Caco-2 (cell line): ENCODE measurements at regions of chr2 and their contacts with region 1.

Region 1: GRCh38 chr2:63888490-63889402 is 47.0 kb downstream of the UGP2 start:
- DNase-seq: peak; percentile 53 to 72
- H3K4me3 ChIP-seq: no peak overlapping the region
- H3K4me3 Mint-ChIP-seq: no peak overlapping the region
- H3K27ac Mint-ChIP-seq: peak overlapping the region; percentile 13
- H3K4me1 ChIP-seq: no peaks in the 10 kb centered on the region
- H3K4me1 Mint-ChIP-seq: no peaks in the 10 kb centered on the region
- H3K27me3 ChIP-seq: no peaks in the 10 kb centered on the region
- H3K27me3 Mint-ChIP-seq: no peaks in the 10 kb centered on the region
- CTCF ChIP-seq: peak; percentile 91 to 93

Region 2: DNA sequence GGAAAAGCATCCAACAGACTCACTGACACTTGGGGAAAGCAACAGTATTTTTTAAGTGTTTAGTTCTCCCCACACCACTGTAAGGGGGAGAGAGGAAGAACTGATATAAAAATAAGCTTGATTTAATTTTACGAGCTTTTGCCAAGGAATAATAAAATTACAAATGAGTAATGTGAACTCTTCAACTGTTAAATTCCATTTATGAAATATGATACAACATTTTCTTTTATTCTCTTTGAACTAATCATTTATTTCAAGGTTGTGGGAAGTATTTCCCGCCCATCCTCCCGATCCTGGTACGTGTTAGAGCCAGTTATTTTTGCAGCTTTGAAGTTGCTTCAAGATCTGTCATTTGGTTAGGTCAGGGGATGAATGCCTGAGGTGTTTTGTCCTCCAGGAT is 335.7 kb before region 1 on chr2:
- CTCF ChIA-PET with region 1: no interaction called
- POLR2A ChIA-PET with region 1: no interaction called
- intact Hi-C with region 1: no loop called
- DNase-seq: no peak
- H3K4me3 ChIP-seq: no peak overlapping the region
- H3K4me3 Mint-ChIP-seq: no peak overlapping the region
- H3K27ac Mint-ChIP-seq: no peak overlapping the region
- H3K4me1 ChIP-seq: 0 out of 2 replicates have a peak, but pooled peaks cover 6% of the 10 kb centered on the region
- H3K4me1 Mint-ChIP-seq: peaks cover 6% of the 10 kb centered on the region
- H3K27me3 ChIP-seq: no peaks in the 10 kb centered on the region
- H3K27me3 Mint-ChIP-seq: no peaks in the 10 kb centered on the region
- CTCF ChIP-seq: no peak

Region 3: DNA sequence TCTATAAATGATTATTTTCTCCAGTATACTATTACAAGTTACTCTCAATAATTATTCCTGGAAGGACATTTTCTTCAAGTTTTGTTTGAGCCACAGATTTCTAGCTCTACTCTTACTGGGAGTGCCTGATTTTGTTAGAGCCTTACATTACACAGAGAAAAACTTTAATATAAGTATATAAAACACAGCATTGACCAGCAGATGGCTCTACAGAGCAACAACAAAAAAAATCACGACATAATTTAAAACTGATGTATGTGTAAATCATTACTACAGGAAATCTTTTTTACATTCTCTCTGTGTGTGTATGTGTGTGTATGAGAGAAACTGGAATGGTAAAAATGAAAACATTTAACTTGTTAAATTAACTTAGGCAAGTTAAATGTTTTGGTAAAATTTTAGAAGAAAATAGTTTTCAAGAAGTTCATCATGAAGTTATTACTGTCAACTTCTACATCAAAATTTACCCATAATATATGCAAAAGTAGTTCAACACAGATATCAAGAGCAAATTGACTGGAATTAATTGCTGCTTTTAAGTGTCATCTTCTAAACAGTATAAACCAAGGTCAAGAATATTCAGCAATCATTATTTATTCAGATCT is 196.6 kb before region 1 on chr2:
- CTCF ChIA-PET with region 1: no interaction called
- POLR2A ChIA-PET with region 1: no interaction called
- intact Hi-C with region 1: loop called (anchors 1 kb)
- DNase-seq: peak in 1 of 2 experiments; percentile 48
- H3K4me3 ChIP-seq: no peak overlapping the region
- H3K4me3 Mint-ChIP-seq: no peak overlapping the region
- H3K27ac Mint-ChIP-seq: no peak overlapping the region
- H3K4me1 ChIP-seq: no peaks in the 10 kb centered on the region
- H3K4me1 Mint-ChIP-seq: peaks cover 10% of the 10 kb centered on the region
- H3K27me3 ChIP-seq: no peaks in the 10 kb centered on the region
- H3K27me3 Mint-ChIP-seq: no peaks in the 10 kb centered on the region
- CTCF ChIP-seq: peak; percentile 51 to 56